Activated naive CD4-positive, alpha-beta T cell treated with anti-CD3 and anti-CD28 coated beads, Interleukin-2, amount 10 ng/mL, durations not matched to agents 7 days and 5 days (primary cell): ENCODE measurements at regions of chr1 and their contacts with region 1.

Region 1: GRCh38 chr1:54671985-54672608 is 30.5 kb downstream of the MROH7 start:
- DNase-seq: peak; percentile 82
- H3K4me3 Mint-ChIP-seq: no peak overlapping the region
- H3K27ac Mint-ChIP-seq: no peak overlapping the region
- H3K4me1 Mint-ChIP-seq: peaks cover 6% of the 10 kb centered on the region
- H3K27me3 Mint-ChIP-seq: peaks cover 11% of the 10 kb centered on the region

Region 2: DNA sequence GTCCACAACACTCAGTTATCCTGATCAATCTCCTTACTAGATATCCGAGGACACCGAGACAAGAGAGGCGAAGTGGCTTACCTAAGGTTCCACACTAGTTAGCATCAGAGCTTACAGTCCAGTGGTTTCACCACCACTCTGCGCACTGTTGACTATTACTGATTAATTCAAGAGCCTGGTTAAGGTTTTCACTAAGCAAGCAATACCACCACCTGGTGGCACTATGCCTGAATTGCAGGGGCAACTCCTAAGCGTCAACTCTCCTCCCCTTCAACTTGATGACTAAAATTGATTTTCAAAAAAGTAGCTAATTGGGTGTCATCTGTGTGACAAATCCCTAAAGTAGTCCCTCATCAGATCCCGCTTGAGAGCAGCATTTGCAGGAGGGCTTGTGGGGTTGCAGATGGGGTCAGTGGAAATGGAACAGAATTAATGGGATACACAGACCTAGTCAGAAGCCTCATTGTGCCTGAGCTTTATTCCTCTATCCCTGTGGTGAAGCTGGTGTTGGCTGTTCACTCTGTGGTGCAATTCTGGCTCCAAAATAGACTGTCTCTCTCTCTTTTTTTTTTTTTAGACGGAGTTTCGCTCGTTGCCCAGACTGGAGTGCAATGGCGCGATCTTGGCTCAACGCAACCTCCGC is 119.9 kb after region 1 on chr1:
- CTCF ChIA-PET with region 1: interaction called, 21 read pairs
- DNase-seq: peak; percentile 71
- H3K4me3 Mint-ChIP-seq: no peak overlapping the region
- H3K27ac Mint-ChIP-seq: no peak overlapping the region
- H3K4me1 Mint-ChIP-seq: peaks cover 10% of the 10 kb centered on the region
- H3K27me3 Mint-ChIP-seq: no peaks in the 10 kb centered on the region